ENCODE measurements at regions of chr9 and their contacts with region 1.

Region 1: GRCh38 chr9:116163293-116164055 is 9.9 kb downstream of the PAPPA start:
- DNase-seq: no peak
- ATAC-seq: peak; percentile 52

Region 2: DNA sequence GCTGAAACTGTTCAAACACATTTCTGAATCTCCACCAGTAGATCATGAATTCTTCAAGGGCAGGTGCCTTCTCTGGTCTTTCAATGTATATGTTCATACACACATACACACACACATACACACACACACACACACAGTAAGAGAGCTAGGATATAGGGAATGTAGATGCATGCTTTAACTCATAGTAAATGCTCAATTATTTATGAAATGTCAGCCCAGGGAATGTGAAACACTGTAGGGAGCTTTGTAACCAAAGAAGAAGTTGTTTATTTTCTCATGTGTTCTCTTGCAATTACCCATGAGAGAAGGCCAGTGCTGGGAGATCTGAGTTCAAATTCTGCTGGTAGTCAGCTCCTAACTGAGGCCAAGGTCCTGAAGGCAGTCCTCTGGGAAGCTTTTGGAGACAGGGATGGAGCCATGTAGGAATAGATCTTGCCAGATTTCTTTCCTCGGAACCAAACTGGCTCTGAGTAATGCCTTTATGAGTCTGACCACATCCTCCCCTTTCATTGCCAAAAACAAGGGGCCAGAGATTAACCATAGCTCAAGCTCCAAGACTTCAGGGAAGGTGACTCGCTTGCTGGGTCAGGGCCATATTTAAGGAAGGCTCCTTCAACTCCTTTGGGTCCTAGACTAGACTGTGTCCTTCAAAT is 558.5 kb before region 1 on chr9:
- intact Hi-C with region 1: no loop called
- DNase-seq: no peak
- ATAC-seq: peak; percentile 53

Region 3: DNA sequence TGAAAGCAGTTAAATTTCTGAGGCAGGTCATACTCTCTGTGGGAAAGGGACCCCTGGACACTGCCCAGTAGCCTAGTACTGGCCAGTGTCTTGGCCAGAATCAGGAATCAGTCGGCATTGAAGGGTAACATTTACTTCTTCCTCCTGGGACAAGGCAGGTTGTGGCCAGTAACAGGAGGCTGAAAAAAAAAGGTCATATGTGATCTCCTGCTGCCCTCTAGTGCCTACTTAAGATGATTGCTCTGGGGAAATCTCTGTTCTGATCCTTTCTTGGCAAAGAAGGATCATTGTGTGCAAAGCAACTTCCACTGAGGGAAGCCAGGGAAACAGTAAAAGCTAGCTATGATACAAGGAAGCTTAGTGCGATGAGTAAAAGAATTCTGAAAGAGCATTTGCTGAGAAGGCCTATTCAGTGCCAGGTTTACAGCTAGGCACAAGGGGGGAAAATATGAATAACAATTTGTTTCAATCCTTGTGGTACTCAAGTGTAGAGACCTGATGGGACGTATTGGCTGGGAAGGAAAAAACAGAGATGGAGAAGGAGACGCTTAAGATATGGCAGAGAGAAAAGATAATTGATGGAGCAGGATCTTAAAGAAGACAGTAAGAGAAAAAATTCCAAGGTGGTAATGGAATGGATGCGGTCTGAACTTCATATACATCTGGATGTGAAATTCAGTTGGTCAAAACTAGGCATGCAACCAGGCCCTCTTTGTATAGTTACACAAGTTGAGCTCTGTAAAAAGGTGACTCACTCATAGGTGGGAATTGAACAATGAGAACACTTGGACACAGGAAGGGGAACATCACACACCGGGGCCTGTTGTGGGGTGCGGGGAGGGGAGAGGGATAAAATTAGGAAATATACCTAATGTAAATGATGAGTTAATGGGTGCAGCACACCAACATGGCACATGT is 497.8 kb after region 1 on chr9:
- intact Hi-C with region 1: loop called (anchors 10 kb)
- DNase-seq: no peak
- ATAC-seq: peak; percentile 82

Measured in left ventricle myocardium superior (tissue), 1 donor.